HEK293 (cell line): ENCODE measurements at regions of chr17 and their contacts with region 1.

Region 1: DNA sequence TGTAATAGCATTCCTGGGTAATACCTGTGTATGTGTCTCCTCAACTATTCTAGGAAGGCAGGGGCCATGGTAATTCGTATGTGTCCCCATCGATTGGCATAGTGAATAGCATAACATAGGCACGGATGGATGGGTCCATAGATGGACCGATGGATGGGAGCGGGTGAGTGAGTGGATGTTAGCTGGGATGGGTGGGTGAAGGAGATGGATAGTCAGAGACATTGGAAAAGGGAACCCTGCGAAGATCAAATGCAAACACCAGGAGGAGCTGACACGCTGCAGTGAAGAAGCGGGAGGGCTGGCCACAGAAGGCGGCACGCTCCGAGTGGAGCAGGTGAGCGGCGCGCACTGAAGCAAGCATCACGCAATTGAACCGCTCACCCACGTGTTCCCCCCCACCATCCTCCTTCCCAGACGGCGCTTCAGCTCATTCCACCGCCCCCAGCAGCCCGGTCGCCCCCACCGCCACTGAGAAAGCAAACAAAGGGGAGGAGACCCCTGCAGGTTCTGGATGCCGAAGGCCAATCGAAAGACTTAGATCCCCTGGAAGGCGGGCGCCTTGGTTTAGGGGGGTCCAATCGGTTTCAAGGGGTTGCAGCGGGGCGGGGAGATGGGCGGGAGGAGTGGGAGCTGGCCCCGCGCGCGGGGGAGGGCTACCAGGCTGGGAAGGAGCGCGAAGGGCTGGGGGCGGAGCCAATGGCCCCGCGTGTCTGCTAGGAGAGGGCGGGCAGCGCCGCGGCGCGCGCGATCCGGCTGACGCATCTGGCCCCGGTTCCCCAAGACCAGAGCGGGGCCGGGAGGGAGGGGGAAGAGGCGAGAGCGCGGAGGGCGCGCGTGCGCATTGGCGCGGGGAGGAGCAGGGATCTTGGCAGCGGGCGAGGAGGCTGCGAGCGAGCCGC is at the start of gene ARRB2:
- H3K4me3 ChIP-seq: peak within 1 kb of the TSS; percentile 51
- H3K27ac ChIP-seq: peak within 1 kb of the TSS; percentile 84
- H3K4me1 ChIP-seq: peaks cover 5% of the 10 kb centered on the region; the same call in 1 of the 2 replicates
- CTCF ChIP-seq: peak; percentile 94

Region 2: DNA sequence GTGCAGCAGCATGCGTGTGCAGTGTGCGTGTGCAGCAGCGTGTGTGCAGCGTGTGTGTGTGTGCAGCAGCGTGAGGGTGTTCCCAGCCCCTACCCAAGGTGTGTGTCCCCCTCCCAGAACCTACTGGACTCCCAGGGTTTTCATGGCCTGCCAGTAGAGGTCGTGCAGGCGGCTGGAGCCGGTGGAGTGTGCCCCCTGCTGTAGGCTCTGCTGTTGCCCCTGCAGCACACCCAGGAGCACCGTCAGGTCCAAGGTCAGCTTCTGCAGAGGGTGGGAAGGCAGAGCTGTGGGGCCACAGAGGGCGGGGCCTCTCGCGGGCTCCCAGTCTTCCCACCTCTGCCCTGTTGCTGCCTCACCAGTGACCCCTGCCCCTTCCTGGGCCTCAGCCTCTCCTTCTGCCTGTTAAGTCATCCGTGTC is 169.8 kb before region 1 on chr17:
- CTCF ChIA-PET with region 1: no interaction called
- POLR2A ChIA-PET with region 1: no interaction called
- H3K4me3 ChIP-seq: no peak overlapping the region
- H3K27ac ChIP-seq: no peak overlapping the region
- H3K4me1 ChIP-seq: no peaks in the 10 kb centered on the region
- CTCF ChIP-seq: peak; percentile 76

Region 3: GRCh38 chr17:4721203-4722135 is 11.4 kb after region 1 on chr17:
- CTCF ChIA-PET with region 1: interaction called, 5 read pairs
- POLR2A ChIA-PET with region 1: interaction called, 10 read pairs
- H3K4me3 ChIP-seq: no peak overlapping the region
- H3K27ac ChIP-seq: peak overlapping the region; percentile 63
- H3K4me1 ChIP-seq: peaks cover 31% of the 10 kb centered on the region
- CTCF ChIP-seq: no peak

Region 4: GRCh38 chr17:4733073-4733531 is 23.1 kb after region 1 on chr17:
- CTCF ChIA-PET with region 1: interaction called, 4 read pairs
- POLR2A ChIA-PET with region 1: interaction called, 24 read pairs
- H3K4me3 ChIP-seq: no peak overlapping the region
- H3K27ac ChIP-seq: no peak overlapping the region
- H3K4me1 ChIP-seq: no peaks in the 10 kb centered on the region
- CTCF ChIP-seq: 0 out of 2 replicates have a peak, but pooled peaks have one; percentile 8

Region 5: GRCh38 chr17:4796553-4796921 is 86.5 kb after region 1 on chr17:
- CTCF ChIA-PET with region 1: no interaction called
- POLR2A ChIA-PET with region 1: interaction called, 12 read pairs
- H3K4me3 ChIP-seq: peak overlapping the region; percentile 97
- H3K27ac ChIP-seq: peak overlapping the region; percentile 72
- H3K4me1 ChIP-seq: 0 out of 2 replicates have a peak, but pooled peaks cover 2% of the 10 kb centered on the region
- CTCF ChIP-seq: no peak

Region 6: GRCh38 chr17:4887581-4887980 is 177.5 kb after region 1 on chr17:
- CTCF ChIA-PET with region 1: interaction called, 16 read pairs
- POLR2A ChIA-PET with region 1: interaction called, 3 read pairs
- H3K4me3 ChIP-seq: no peak overlapping the region
- H3K27ac ChIP-seq: no peak overlapping the region
- H3K4me1 ChIP-seq: no peaks in the 10 kb centered on the region
- CTCF ChIP-seq: no peak